ENCODE measurements at regions of chr1 and their contacts with region 1.

Region 1: DNA sequence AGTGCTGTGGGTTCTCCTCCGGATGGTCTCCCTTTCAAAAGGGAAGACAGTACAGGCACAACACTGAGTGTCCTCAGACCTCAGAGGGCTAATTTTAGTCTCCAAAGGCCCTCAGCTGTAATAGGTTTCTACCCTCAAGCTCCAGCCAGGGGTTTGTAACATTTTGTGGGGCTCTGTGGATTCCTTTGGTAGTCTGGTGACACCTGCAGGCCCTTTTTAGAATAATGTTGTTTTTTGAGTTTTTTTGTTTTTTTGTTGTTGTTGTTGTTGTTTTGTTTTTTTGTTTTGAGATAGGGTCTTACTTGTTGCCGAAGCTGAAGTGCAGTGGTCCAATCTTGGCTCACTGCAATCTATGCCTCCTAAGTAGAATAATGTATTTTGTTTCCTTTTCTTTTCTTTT is 15.0 kb upstream of the TMEM201 start:
- DNase-seq: no peak
- H3K4me3 ChIP-seq: no peak overlapping the region
- H3K27me3 ChIP-seq: no peaks in the 10 kb centered on the region
- CTCF ChIP-seq: peak; percentile 44

Region 2: GRCh38 chr1:9588551-9589143 is 14.9 kb after region 1 on chr1 and contains the start of gene TMEM201:
- CTCF ChIA-PET with region 1: interaction called, 11 read pairs
- POLR2A ChIA-PET with region 1: no interaction called
- DNase-seq: peak; percentile 47
- H3K4me3 ChIP-seq: peak within 1 kb of the TSS; percentile 50
- H3K27me3 ChIP-seq: no peaks in the 10 kb centered on the region
- CTCF ChIP-seq: peak; percentile 48
- polyA plus RNA-seq, gene TMEM201: 1.1 and 2.9 TPM in 2 replicates

Measured in BJ (cell line).